A673 (cell line): ENCODE measurements at regions of chr1 and their contacts with region 1.

Region 1: DNA sequence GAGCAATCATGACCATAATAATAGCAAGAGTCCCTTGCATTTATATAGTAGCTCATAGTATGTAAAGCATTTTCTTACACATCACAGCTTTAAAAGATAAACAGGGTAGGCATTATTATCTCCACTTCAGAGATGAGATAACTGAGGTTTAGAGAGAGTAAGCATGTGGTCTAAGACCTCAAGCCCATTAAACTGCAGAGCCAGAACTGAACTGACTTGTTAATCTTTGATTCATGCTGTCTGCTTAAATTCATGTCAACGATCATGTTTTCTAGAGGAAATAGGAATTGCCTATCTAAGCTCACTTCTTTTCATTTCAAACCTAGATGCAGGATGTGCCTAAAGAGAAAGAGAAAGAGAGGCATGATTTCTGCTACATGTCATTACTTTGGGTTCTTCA is 524.8 kb downstream of the PTPRC start:
- DNase-seq: no peak
- H3K4me3 ChIP-seq: no peak overlapping the region
- H3K27ac ChIP-seq: peak overlapping the region; percentile 100
- H3K4me1 ChIP-seq: peaks cover 54% of the 10 kb centered on the region
- H3K27me3 ChIP-seq: no peaks in the 10 kb centered on the region
- CTCF ChIP-seq: no peak

Region 2: GRCh38 chr1:198763298-198763714 is 400.4 kb before region 1 on chr1:
- CTCF ChIA-PET with region 1: no interaction called
- POLR2A ChIA-PET with region 1: no interaction called
- intact Hi-C with region 1: loop called (anchors 2 kb)
- DNase-seq: peak; percentile 67
- H3K4me3 ChIP-seq: no peak overlapping the region
- H3K27ac ChIP-seq: peak overlapping the region; percentile 73
- H3K4me1 ChIP-seq: peaks cover 27% of the 10 kb centered on the region
- H3K27me3 ChIP-seq: no peaks in the 10 kb centered on the region
- CTCF ChIP-seq: no peak

Region 3: DNA sequence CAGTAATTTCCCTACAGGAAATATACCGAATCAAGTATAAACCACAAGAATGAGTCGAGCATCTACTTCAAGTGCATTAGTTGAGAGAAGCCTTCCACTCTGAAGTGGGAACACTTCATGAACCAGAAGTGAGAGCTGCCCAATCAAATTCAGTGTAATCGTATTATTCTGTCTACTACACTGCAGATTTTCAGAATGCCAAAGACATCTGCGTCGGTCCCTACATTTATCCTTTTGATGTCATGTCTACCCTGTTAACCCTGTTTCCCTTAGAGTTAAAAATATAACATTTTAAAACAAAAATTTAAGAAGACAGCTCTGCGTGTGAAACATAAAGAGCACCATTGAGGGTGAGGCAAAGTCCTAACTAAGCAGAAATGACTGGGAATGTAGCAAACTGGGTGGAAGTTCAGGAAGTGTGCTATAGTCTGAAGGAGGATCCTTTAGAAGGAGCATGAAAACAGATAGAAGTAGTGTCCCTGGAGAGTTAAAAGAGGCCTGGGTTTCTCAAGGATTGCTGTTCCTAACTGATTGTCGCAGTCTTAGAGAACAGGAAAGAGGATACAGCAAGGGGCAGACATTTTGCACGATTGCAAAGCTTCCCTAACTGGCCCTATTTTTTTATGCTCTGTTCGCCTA is 233.6 kb before region 1 on chr1:
- CTCF ChIA-PET with region 1: no interaction called
- POLR2A ChIA-PET with region 1: no interaction called
- intact Hi-C with region 1: loop called (anchors 1 kb)
- DNase-seq: peak; percentile 92
- H3K4me3 ChIP-seq: peak overlapping the region; percentile 68
- H3K27ac ChIP-seq: peak overlapping the region; percentile 94
- H3K4me1 ChIP-seq: peaks cover 66% of the 10 kb centered on the region
- H3K27me3 ChIP-seq: no peaks in the 10 kb centered on the region
- CTCF ChIP-seq: no peak

Region 4: GRCh38 chr1:199226163-199226562 is 62.5 kb after region 1 on chr1:
- CTCF ChIA-PET with region 1: no interaction called
- POLR2A ChIA-PET with region 1: no interaction called
- intact Hi-C with region 1: loop called (anchors 1 kb)
- DNase-seq: peak; percentile 88
- H3K4me3 ChIP-seq: no peak overlapping the region
- H3K27ac ChIP-seq: peak overlapping the region; percentile 90
- H3K4me1 ChIP-seq: peaks cover 28% of the 10 kb centered on the region
- H3K27me3 ChIP-seq: no peaks in the 10 kb centered on the region
- CTCF ChIP-seq: no peak

Region 5: DNA sequence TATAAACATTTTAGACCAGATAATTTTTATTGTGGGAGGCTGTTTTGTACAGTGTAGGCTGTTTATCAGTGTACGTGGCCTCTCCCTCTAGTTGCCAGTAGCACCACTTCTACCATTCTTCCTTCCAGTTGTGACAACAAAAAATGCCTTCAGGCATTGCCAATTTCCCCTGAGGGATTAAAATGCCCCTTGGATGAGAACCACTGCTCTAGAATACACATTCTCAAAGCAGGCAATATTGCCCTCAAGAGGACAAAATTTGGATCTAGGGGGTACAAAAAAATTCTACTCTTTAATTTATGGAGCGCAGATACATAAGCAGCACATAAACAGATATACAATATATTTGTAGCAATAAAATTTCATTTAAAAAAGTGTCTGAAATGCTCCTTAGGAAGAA is 149.8 kb after region 1 on chr1:
- CTCF ChIA-PET with region 1: interaction called, 4 read pairs
- POLR2A ChIA-PET with region 1: interaction called, 3 read pairs
- intact Hi-C with region 1: loop called (anchors 1 kb)
- DNase-seq: peak; percentile 95
- H3K4me3 ChIP-seq: no peak overlapping the region
- H3K27ac ChIP-seq: peak overlapping the region; percentile 95
- H3K4me1 ChIP-seq: peaks cover 47% of the 10 kb centered on the region
- H3K27me3 ChIP-seq: no peaks in the 10 kb centered on the region
- CTCF ChIP-seq: peak; percentile 62

Region 6: GRCh38 chr1:199551967-199552565 is 388.4 kb after region 1 on chr1:
- CTCF ChIA-PET with region 1: interaction called, 8 read pairs
- POLR2A ChIA-PET with region 1: no interaction called
- intact Hi-C with region 1: loop called (anchors 1 kb)
- DNase-seq: peak; percentile 90
- H3K4me3 ChIP-seq: no peak overlapping the region
- H3K27ac ChIP-seq: peak overlapping the region; percentile 81
- H3K4me1 ChIP-seq: peaks cover 33% of the 10 kb centered on the region
- H3K27me3 ChIP-seq: no peaks in the 10 kb centered on the region
- CTCF ChIP-seq: peak; percentile 92